ENCODE measurements at regions of chr5 and their contacts with region 1.

Region 1: GRCh38 chr5:117394506-117395157 is 820.0 kb upstream of the SEMA6A start:
- DNase-seq: peak; percentile 64
- H3K4me3 ChIP-seq: no peak overlapping the region
- H3K27ac ChIP-seq: no peak overlapping the region
- H3K4me1 ChIP-seq: no peaks in the 10 kb centered on the region
- H3K27me3 ChIP-seq: no peaks in the 10 kb centered on the region
- CTCF ChIP-seq: no peak

Region 2: DNA sequence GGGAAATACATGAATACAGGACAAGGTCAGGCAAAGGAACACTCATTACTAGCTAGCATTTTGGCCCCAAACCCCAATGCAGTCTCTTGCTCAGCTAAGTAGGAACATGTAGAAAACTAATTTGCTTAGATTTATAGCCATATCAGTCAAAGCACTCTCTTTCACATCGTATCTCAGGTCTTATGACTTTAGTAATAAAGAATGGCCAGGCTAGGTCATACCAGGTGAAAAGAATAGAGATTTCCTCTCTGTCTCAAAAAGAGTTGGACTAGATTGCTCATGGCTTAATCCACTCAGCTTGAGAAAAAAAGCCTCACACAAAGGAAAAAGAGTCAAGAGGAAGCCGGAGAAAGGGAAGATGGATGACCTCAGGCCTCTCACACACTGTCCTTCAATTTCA is 47.4 kb before region 1 on chr5:
- intact Hi-C with region 1: loop called (anchors 10 kb)
- DNase-seq: no peak
- H3K4me3 ChIP-seq: no peak overlapping the region
- H3K27ac ChIP-seq: no peak overlapping the region
- H3K4me1 ChIP-seq: no peaks in the 10 kb centered on the region
- H3K27me3 ChIP-seq: no peaks in the 10 kb centered on the region
- CTCF ChIP-seq: no peak

Measured in colonic mucosa (tissue), 4 donors.